H1 (cell line): ENCODE measurements at regions of chr1 and their contacts with region 1.

Region 1: GRCh38 chr1:6613361-6614018 is at the start of gene PHF13:
- DNase-seq: peak; percentile 98 to 99
- H3K4me3 ChIP-seq: peak within 1 kb of the TSS; percentile 76 to 100 (median 86)
- H3K27ac ChIP-seq: peak within 1 kb of the TSS; percentile 81; the same call in 1 of the 2 replicates
- H3K4me1 ChIP-seq: peaks cover 0 to 2% (median 0%) of the 10 kb centered on the region in 4 experiments; a peak in 1 of 7 replicates
- H3K27me3 ChIP-seq: no peaks in the 10 kb centered on the region
- CTCF ChIP-seq: 0 out of 4 replicates have a peak, but pooled peaks of 1 of the 3 experiments have one; percentile 3
- EP300 ChIP-seq: peak in 1 of 2 experiments; percentile 71; a peak in 1 of 3 replicates
- POLR2A ChIP-seq: no peak; a peak in 1 of 3 replicates
- RAD21 ChIP-seq: no peak
- total RNA-seq, gene PHF13: 38.7 and 39.6 TPM in 2 replicates

Region 2: GRCh38 chr1:6624710-6625583 is 11.5 kb after region 1 on chr1 and contains the start of gene THAP3:
- CTCF ChIA-PET with region 1: interaction called, 9 read pairs
- POLR2A ChIA-PET with region 1: interaction called, 15 read pairs
- DNase-seq: peak in 1 of 2 experiments; percentile 93
- H3K4me3 ChIP-seq: peak within 1 kb of the TSS; percentile 74 to 83 (median 76)
- H3K27ac ChIP-seq: peak within 1 kb of the TSS; percentile 75
- H3K4me1 ChIP-seq: 0 out of 7 replicates have a peak, but pooled peaks cover 0 to 2% (median 0%) of the 10 kb centered on the region in 4 experiments
- H3K27me3 ChIP-seq: no peaks in the 10 kb centered on the region
- CTCF ChIP-seq: peak in 1 of 3 experiments; percentile 38; a peak in 2 of 4 replicates
- EP300 ChIP-seq: 0 out of 3 replicates have a peak, but pooled peaks of 1 of the 2 experiments have one; percentile 13
- POLR2A ChIP-seq: peak in 1 of 2 experiments; percentile 25; a peak in 1 of 3 replicates
- RAD21 ChIP-seq: no peak
- total RNA-seq, gene THAP3: 12.4 and 15.3 TPM in 2 replicates